Endothelial cell of umbilical vein (primary cell): ENCODE measurements at regions of chr9 and their contacts with region 1.

Region 1: DNA sequence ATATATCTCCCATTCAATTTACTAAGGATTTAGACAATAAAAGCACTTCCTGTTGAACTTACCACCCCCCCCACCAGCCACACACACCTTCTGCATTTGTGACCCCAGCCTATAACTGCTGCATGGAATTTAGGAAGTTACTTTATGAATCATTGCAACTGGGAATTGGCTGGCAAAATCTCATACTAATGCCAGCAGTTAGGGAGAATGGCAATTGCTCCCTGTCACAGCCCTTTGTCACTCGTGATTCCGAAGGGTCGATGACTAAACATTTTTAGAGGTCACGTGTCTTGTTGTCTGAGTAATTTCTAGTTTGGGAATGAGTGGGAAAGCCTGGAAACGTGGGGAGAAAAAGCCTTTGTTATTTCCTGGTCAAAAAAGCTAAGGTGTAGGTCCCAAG is 46.6 kb upstream of the PCA3 start:
- DNase-seq: peak; percentile 77
- H3K4me3 ChIP-seq: no peak overlapping the region
- H3K27ac ChIP-seq: peak overlapping the region; percentile 5
- H3K4me1 ChIP-seq: peaks cover 30% of the 10 kb centered on the region
- H3K27me3 ChIP-seq: peaks cover 1% of the 10 kb centered on the region in 2 experiments
- CTCF ChIP-seq: no peak
- POLR2A ChIP-seq: no peak

Region 2: GRCh38 chr9:76321205-76321828 is 396.3 kb before region 1 on chr9:
- CTCF ChIA-PET with region 1: no interaction called
- POLR2A ChIA-PET with region 1: no interaction called
- dilution Hi-C with region 1: no loop called
- intact Hi-C with region 1: loop called (anchors 5 kb)
- DNase-seq: peak; percentile 87
- H3K4me3 ChIP-seq: no peak overlapping the region
- H3K27ac ChIP-seq: peak overlapping the region; percentile 63
- H3K4me1 ChIP-seq: peaks cover 8% of the 10 kb centered on the region
- H3K27me3 ChIP-seq: no peaks in the 10 kb centered on the region
- CTCF ChIP-seq: no peak
- POLR2A ChIP-seq: no peak

Region 3: GRCh38 chr9:77005216-77005615 is 287.6 kb after region 1 on chr9:
- CTCF ChIA-PET with region 1: no interaction called
- POLR2A ChIA-PET with region 1: no interaction called
- dilution Hi-C with region 1: no loop called
- intact Hi-C with region 1: loop called (anchors 5 kb)
- DNase-seq: peak; percentile 79
- H3K4me3 ChIP-seq: no peak overlapping the region
- H3K27ac ChIP-seq: no peak overlapping the region
- H3K4me1 ChIP-seq: peaks cover 3% of the 10 kb centered on the region
- H3K27me3 ChIP-seq: peaks cover 7 to 21% of the 10 kb centered on the region in 2 experiments
- CTCF ChIP-seq: no peak
- POLR2A ChIP-seq: no peak

Region 4: DNA sequence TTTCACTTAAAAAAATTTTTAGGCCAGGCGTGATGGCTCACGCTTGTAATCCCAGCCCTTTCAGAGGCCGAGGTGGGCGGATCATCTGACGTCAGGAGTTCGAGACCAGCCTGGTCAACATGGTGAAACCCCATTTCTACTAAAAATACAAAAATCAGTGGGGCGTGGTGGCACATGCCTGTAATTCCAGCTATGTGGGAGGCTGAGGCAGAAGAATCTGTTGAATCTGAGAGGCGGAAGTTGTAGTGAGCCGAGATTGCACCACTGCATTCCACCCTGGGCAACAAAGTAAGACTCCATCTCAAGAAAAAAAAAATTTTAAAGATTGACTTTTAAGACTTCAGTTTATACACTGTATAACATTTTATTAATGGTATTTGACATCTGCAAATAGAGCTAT is 1374.1 kb after region 1 on chr9:
- CTCF ChIA-PET with region 1: no interaction called
- POLR2A ChIA-PET with region 1: no interaction called
- dilution Hi-C with region 1: no loop called
- intact Hi-C with region 1: loop called (anchors 5 kb)
- DNase-seq: no peak
- H3K4me3 ChIP-seq: no peak overlapping the region
- H3K27ac ChIP-seq: no peak overlapping the region
- H3K4me1 ChIP-seq: no peaks in the 10 kb centered on the region
- H3K27me3 ChIP-seq: peaks cover 2 to 4% of the 10 kb centered on the region in 2 experiments
- CTCF ChIP-seq: no peak
- POLR2A ChIP-seq: no peak